T-cell (primary cell): ENCODE measurements at regions of chr10 and their contacts with region 1.

Region 1: GRCh38 chr10:119080521-119081260 is at the start of gene EIF3A:
- DNase-seq: peak; percentile 74 to 94 (median 87)
- ATAC-seq: peak; percentile 83 to 86 (median 86)
- H3K4me3 ChIP-seq: peak within 1 kb of the TSS; percentile 81
- H3K4me3 Mint-ChIP-seq: peak within 1 kb of the TSS; percentile 95 to 97 (median 96)
- H3K27ac ChIP-seq: peak within 1 kb of the TSS; percentile 93
- H3K27ac Mint-ChIP-seq: peak within 1 kb of the TSS; percentile 91 to 96
- H3K4me1 ChIP-seq: peaks cover 16 to 27% of the 10 kb centered on the region in 2 experiments
- H3K4me1 Mint-ChIP-seq: peaks cover 47 to 49% (median 48%) of the 10 kb centered on the region in 3 donors
- H3K27me3 ChIP-seq: no peaks in the 10 kb centered on the region
- H3K27me3 Mint-ChIP-seq: no peaks in the 10 kb centered on the region
- total RNA-seq, gene EIF3A: 102 to 124 (median 111) TPM

Region 2: DNA sequence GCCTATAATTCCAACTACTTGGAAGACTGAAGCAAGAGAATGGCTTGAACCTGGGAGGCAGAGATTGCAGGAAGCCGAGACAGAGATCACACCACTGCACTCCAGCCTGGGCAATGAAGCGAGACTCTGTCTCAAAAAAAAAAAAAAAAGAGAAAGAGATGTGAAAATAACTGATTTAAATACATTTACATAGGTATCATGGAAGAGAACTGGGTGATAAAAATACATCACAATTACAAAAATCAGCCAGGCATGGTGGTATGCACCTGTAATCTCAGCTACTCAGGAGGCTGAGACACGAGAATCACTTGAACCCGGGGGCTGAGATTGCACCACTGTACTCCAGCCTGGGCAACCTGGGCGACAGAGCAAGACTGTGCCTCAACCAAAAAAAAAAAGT is 31.3 kb before region 1 on chr10:
- CTCF ChIA-PET with region 1: interaction called in 1 of 2 experiments, 9 read pairs
- POLR2A ChIA-PET with region 1: interaction called in 1 of 2 experiments, 10 read pairs
- DNase-seq: no peak
- ATAC-seq: no peak
- H3K4me3 ChIP-seq: no peak overlapping the region
- H3K4me3 Mint-ChIP-seq: no peak overlapping the region
- H3K27ac ChIP-seq: no peak overlapping the region
- H3K27ac Mint-ChIP-seq: no peak overlapping the region
- H3K4me1 ChIP-seq: no peaks in the 10 kb centered on the region
- H3K4me1 Mint-ChIP-seq: peaks cover 12 to 38% (median 25%) of the 10 kb centered on the region in 3 donors
- H3K27me3 ChIP-seq: no peaks in the 10 kb centered on the region
- H3K27me3 Mint-ChIP-seq: no peaks in the 10 kb centered on the region

Region 3: GRCh38 chr10:119090968-119091367 is 10.3 kb after region 1 on chr10:
- CTCF ChIA-PET with region 1: interaction called, 5 to 6 read pairs
- POLR2A ChIA-PET with region 1: interaction called in 1 of 2 experiments, 14 read pairs
- DNase-seq: peak in 34 of 35 experiments; percentile 7 to 82 (median 42)
- ATAC-seq: peak; percentile 87 to 93 (median 88)
- H3K4me3 ChIP-seq: no peak overlapping the region
- H3K4me3 Mint-ChIP-seq: peak overlapping the region; percentile 53 to 71 (median 57)
- H3K27ac ChIP-seq: peak overlapping the region; percentile 90
- H3K27ac Mint-ChIP-seq: peak overlapping the region; percentile 97 to 100
- H3K4me1 ChIP-seq: peaks cover 4 to 53% of the 10 kb centered on the region in 2 experiments
- H3K4me1 Mint-ChIP-seq: peaks cover 40 to 70% (median 52%) of the 10 kb centered on the region in 3 donors
- H3K27me3 ChIP-seq: no peaks in the 10 kb centered on the region
- H3K27me3 Mint-ChIP-seq: no peaks in the 10 kb centered on the region